Right ventricle myocardium superior (tissue), 1 donor: ENCODE measurements at regions of chr9 and their contacts with region 1.

Region 1: GRCh38 chr9:81529556-81530195 is 159.7 kb downstream of the TLE1 start:
- DNase-seq: no peak
- ATAC-seq: peak; percentile 49

Region 2: GRCh38 chr9:81689343-81690190 is 159.9 kb after region 1 on chr9 and contains the start of gene TLE1:
- intact Hi-C with region 1: loop called (anchors 2 kb)
- DNase-seq: peak; percentile 99
- ATAC-seq: peak; percentile 93
- total RNA-seq, gene TLE1: 9.7 TPM

Region 3: GRCh38 chr9:81848472-81848871 is 318.8 kb after region 1 on chr9:
- intact Hi-C with region 1: loop called (anchors 10 kb)
- DNase-seq: no peak
- ATAC-seq: no peak